Activated CD8-positive, alpha-beta T cell treated with anti-CD3 and anti-CD28 coated beads, Interleukin-2, amount 10 ng/mL, durations not matched to agents 7 days and 5 days (primary cell): ENCODE measurements at regions of chr1 and their contacts with region 1.

Region 1: DNA sequence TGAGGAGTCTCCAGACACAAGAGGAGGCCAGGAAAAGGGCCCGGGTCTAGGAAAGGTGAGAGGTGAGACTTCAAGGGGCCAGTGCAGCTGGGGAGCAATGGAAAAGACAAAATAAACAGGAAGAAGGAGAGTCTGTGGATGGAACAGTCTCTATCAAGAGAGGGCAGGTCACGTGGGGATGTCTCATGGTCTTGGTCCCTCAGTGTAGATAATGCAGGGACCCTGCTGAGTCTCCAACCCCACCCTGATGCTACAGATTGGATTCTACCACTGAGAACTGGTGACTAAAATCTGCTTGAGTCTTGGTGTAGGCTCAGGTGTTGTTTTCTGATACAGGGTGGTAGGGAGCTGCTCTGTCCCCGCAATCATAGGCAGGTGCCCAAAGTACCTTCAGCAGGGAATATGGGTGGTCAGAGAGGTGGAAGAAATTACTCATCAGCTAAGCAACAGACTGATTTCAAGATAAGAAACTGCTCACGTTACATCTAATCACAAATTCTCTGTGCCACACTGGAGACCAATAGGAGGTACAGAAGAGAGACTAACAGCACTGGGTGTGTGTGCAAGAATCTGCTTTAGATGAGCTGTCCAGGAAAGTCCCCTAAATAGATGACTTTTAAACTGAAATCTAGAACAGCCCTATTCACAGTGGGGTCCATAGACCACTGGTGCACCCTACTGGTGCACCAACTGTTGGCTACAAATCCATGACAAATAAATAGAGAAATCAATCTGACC is 101.5 kb upstream of the TLR5 start:
- DNase-seq: no peak
- ATAC-seq: peak; percentile 53
- H3K4me3 Mint-ChIP-seq: no peak overlapping the region
- H3K27ac Mint-ChIP-seq: peak overlapping the region; percentile 29
- H3K4me1 Mint-ChIP-seq: peaks cover 48% of the 10 kb centered on the region
- H3K27me3 Mint-ChIP-seq: no peaks in the 10 kb centered on the region

Region 2: GRCh38 chr1:223116950-223117349 is 127.6 kb before region 1 on chr1:
- CTCF ChIA-PET with region 1: no interaction called
- POLR2A ChIA-PET with region 1: no interaction called
- DNase-seq: no peak
- ATAC-seq: no peak
- H3K4me3 Mint-ChIP-seq: no peak overlapping the region
- H3K27ac Mint-ChIP-seq: no peak overlapping the region
- H3K4me1 Mint-ChIP-seq: no peaks in the 10 kb centered on the region
- H3K27me3 Mint-ChIP-seq: no peaks in the 10 kb centered on the region

Region 3: GRCh38 chr1:223142795-223143536 is 101.6 kb before region 1 on chr1 and contains the start of gene TLR5:
- CTCF ChIA-PET with region 1: interaction called, 126 read pairs
- POLR2A ChIA-PET with region 1: interaction called, 6 read pairs
- DNase-seq: peak; percentile 89
- ATAC-seq: peak; percentile 94
- H3K4me3 Mint-ChIP-seq: peak within 1 kb of the TSS; percentile 68
- H3K27ac Mint-ChIP-seq: peak within 1 kb of the TSS; percentile 50
- H3K4me1 Mint-ChIP-seq: peaks cover 10% of the 10 kb centered on the region
- H3K27me3 Mint-ChIP-seq: peaks cover 12% of the 10 kb centered on the region
- total RNA-seq, gene TLR5: 0.32 to 0.44 TPM

Region 4: DNA sequence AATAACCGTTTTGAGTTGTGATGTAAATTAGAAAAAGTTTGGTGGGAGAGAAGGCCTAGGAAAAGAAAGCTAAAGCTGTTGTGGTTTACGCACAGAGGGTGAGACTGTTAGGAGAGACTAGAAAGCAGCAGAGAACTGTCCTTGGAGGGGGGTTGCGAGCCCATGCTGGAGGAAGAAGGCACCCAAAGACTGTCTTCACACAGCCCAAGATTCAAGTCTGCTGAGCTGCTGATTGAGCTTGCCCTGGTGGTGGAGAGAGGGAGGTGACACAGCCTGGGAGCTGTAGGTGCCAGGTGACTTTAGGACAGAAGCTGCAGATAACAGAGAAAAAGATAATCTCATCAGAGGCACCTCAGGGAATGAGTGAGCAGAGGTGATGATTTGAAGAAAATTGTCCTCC is 83.2 kb before region 1 on chr1:
- CTCF ChIA-PET with region 1: interaction called, 10 read pairs
- POLR2A ChIA-PET with region 1: no interaction called
- DNase-seq: no peak
- ATAC-seq: peak; percentile 30
- H3K4me3 Mint-ChIP-seq: no peak overlapping the region
- H3K27ac Mint-ChIP-seq: no peak overlapping the region
- H3K4me1 Mint-ChIP-seq: peaks cover 6% of the 10 kb centered on the region
- H3K27me3 Mint-ChIP-seq: no peaks in the 10 kb centered on the region

Region 5: GRCh38 chr1:223175032-223175431 is 69.5 kb before region 1 on chr1:
- CTCF ChIA-PET with region 1: no interaction called
- POLR2A ChIA-PET with region 1: no interaction called
- DNase-seq: no peak
- ATAC-seq: no peak
- H3K4me3 Mint-ChIP-seq: no peak overlapping the region
- H3K27ac Mint-ChIP-seq: no peak overlapping the region
- H3K4me1 Mint-ChIP-seq: no peaks in the 10 kb centered on the region
- H3K27me3 Mint-ChIP-seq: peaks cover 2% of the 10 kb centered on the region

Region 6: DNA sequence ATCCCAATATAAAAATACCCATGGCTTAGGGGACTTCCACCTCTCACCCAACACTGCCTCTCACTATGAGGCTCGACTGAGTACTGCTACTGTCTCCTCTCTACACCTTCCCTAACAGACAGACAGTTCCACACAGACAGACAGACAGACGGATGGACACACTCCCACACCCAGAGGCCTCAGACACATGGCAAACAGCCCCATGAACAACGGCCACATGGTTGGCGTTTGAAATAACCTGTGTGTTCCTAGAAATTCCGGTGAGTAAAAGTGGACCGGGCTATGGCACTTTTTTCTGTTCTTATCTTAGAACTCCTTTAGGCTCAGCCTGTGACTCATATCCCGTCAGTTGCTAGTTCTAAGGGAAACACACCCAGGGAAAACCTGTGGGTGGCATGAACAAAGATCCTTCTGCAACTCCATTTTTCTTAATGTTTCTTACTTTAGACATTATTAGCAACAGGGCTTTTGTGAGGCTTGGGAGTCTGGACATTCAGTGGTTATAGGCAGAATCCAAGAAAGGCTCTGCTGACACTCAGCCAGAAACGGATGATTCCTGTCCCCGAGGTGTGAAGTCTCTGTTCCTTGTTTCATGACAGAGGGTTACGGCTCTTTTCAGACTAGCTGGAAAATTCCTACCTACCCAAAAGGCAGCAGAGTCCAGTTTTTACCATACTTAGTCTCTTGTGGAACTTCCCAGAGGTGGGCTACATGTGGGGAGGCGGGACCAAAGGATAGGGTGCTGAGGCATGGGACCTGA is 10.9 kb before region 1 on chr1:
- CTCF ChIA-PET with region 1: interaction called, 12 read pairs
- POLR2A ChIA-PET with region 1: interaction called, 3 read pairs
- DNase-seq: no peak
- ATAC-seq: no peak
- H3K4me3 Mint-ChIP-seq: no peak overlapping the region
- H3K27ac Mint-ChIP-seq: no peak overlapping the region
- H3K4me1 Mint-ChIP-seq: peaks cover 47% of the 10 kb centered on the region
- H3K27me3 Mint-ChIP-seq: no peaks in the 10 kb centered on the region